A549 (cell line): ENCODE measurements at regions of chr2 and their contacts with region 1.

Region 1: GRCh38 chr2:218466016-218466521 is 47.1 kb downstream of the VIL1 start:
- DNase-seq: peak in 1 of 2 experiments; percentile 23
- ATAC-seq: peak; percentile 64 to 71; a peak in 5 of 6 replicates
- H3K4me3 ChIP-seq: no peak overlapping the region
- H3K27ac ChIP-seq: no peak overlapping the region
- H3K4me1 ChIP-seq: no peaks in the 10 kb centered on the region
- CTCF ChIP-seq: peak; percentile 74
- EP300 ChIP-seq: no peak
- POLR2A ChIP-seq: no peak
- RAD21 ChIP-seq: peak; percentile 60 to 66

Region 2: GRCh38 chr2:218206306-218206705 is 259.8 kb before region 1 on chr2:
- CTCF ChIA-PET with region 1: no interaction called
- POLR2A ChIA-PET with region 1: no interaction called
- DNase-seq: no peak
- ATAC-seq: no peak
- H3K4me3 ChIP-seq: no peak overlapping the region
- H3K27ac ChIP-seq: no peak overlapping the region
- H3K4me1 ChIP-seq: no peaks in the 10 kb centered on the region
- CTCF ChIP-seq: no peak
- EP300 ChIP-seq: no peak
- POLR2A ChIP-seq: no peak
- RAD21 ChIP-seq: no peak

Region 3: DNA sequence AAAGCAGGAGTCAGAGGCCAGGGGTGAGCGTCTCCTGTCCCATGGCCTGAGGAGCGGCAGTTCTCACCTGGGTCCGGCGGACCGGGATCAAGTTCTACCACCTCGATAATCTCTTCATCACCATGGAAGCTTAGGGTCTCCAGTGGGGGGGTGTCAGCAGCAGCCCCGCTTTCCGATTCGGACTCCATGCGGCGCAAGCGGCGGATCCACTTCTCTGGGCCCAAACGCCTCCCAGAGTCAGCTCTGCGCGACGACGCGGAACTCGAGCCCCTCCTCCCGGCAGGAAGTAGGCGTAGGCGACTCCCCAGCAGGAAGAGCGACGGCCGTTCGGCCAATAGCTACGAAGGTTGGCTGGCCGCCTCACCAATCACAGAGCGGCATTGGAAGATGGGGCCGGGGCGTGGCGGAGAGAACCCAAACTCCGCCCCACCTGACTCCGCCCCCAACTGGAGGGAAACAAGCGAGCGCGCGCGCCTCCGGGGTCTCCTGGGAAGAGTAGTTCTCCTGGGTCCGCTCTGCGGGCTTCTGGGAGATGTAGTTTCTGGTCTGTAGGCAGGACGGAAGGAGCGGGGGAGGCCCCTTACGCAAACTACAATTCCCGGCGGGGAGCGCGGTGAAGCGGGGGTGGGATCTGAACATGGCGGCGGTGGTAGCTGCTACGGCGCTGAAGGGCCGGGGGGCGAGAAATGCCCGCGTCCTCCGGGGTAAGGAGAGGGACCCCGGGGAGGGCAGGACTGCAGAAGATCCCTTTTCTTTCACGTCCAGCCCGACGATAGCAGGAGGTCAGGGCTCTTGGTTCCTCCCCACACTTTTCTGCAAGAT is 196.0 kb before region 1 on chr2 and contains the starts of genes AAMP and PNKD:
- CTCF ChIA-PET with region 1: interaction called, 11 read pairs
- POLR2A ChIA-PET with region 1: no interaction called
- DNase-seq: peak; percentile 97 to 99
- ATAC-seq: peak; percentile 88 to 93
- H3K4me3 ChIP-seq: peak within 1 kb of the TSS; percentile 97
- H3K27ac ChIP-seq: peak within 1 kb of the TSS; percentile 90 to 92
- H3K4me1 ChIP-seq: peaks cover 25% of the 10 kb centered on the region
- CTCF ChIP-seq: no peak
- EP300 ChIP-seq: no peak
- POLR2A ChIP-seq: peak; percentile 75
- RAD21 ChIP-seq: no peak
- polyA plus RNA-seq, gene AAMP: 71.3 and 82.0 TPM in 2 replicates
- polyA plus RNA-seq, gene PNKD: 46.2 and 52.6 TPM in 2 replicates

Region 4: GRCh38 chr2:218405684-218406208 is 60.3 kb before region 1 on chr2:
- CTCF ChIA-PET with region 1: interaction called, 14 read pairs
- POLR2A ChIA-PET with region 1: no interaction called
- DNase-seq: no peak
- ATAC-seq: peak; percentile 9 to 37
- H3K4me3 ChIP-seq: peak overlapping the region; percentile 28
- H3K27ac ChIP-seq: peak overlapping the region; percentile 74 to 90
- H3K4me1 ChIP-seq: peaks cover 32% of the 10 kb centered on the region
- CTCF ChIP-seq: no peak
- EP300 ChIP-seq: no peak
- POLR2A ChIP-seq: no peak
- RAD21 ChIP-seq: no peak

Region 5: GRCh38 chr2:218431868-218432267 is 34.2 kb before region 1 on chr2:
- CTCF ChIA-PET with region 1: interaction called, 11 read pairs
- POLR2A ChIA-PET with region 1: interaction called, 3 read pairs
- DNase-seq: no peak
- ATAC-seq: no peak
- H3K4me3 ChIP-seq: no peak overlapping the region
- H3K27ac ChIP-seq: no peak overlapping the region
- H3K4me1 ChIP-seq: no peaks in the 10 kb centered on the region
- CTCF ChIP-seq: no peak
- EP300 ChIP-seq: no peak
- POLR2A ChIP-seq: no peak
- RAD21 ChIP-seq: no peak

Region 6: DNA sequence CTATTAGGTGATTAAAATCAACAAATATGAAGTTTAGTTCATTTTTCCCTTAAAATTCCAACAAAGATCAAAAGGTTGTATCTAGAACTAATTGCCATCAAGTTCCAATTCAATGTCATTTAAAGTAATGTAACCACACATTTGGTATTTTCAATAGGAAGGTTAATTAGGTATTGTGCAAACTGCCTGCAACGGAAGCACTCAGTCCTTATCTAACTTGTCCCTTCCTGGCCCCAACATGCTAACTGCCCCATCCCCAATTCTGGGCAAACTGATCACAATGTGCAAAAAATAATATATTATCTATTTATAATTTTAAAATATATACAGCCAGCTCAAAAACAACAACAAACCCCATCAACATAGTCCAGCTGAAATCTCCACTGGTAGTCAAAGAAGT is 14.0 kb before region 1 on chr2:
- CTCF ChIA-PET with region 1: interaction called, 23 read pairs
- POLR2A ChIA-PET with region 1: no interaction called
- DNase-seq: no peak
- ATAC-seq: no peak
- H3K4me3 ChIP-seq: no peak overlapping the region
- H3K27ac ChIP-seq: no peak overlapping the region
- H3K4me1 ChIP-seq: peaks cover 26% of the 10 kb centered on the region
- CTCF ChIP-seq: no peak
- EP300 ChIP-seq: no peak
- POLR2A ChIP-seq: no peak
- RAD21 ChIP-seq: no peak